ENCODE measurements at regions of chr6 and their contacts with region 1.

Region 1: GRCh38 chr6:28683944-28684538 is 158.4 kb downstream of the GPX5 start:
- DNase-seq: peak; percentile 55
- H3K4me3 ChIP-seq: no peak overlapping the region
- H3K27ac ChIP-seq: no peak overlapping the region
- H3K4me1 ChIP-seq: peaks cover 7% of the 10 kb centered on the region
- H3K27me3 ChIP-seq: peaks cover 20 to 25% of the 10 kb centered on the region in 2 experiments
- CTCF ChIP-seq: peak; percentile 43 to 48
- POLR2A ChIP-seq: no peak

Region 2: DNA sequence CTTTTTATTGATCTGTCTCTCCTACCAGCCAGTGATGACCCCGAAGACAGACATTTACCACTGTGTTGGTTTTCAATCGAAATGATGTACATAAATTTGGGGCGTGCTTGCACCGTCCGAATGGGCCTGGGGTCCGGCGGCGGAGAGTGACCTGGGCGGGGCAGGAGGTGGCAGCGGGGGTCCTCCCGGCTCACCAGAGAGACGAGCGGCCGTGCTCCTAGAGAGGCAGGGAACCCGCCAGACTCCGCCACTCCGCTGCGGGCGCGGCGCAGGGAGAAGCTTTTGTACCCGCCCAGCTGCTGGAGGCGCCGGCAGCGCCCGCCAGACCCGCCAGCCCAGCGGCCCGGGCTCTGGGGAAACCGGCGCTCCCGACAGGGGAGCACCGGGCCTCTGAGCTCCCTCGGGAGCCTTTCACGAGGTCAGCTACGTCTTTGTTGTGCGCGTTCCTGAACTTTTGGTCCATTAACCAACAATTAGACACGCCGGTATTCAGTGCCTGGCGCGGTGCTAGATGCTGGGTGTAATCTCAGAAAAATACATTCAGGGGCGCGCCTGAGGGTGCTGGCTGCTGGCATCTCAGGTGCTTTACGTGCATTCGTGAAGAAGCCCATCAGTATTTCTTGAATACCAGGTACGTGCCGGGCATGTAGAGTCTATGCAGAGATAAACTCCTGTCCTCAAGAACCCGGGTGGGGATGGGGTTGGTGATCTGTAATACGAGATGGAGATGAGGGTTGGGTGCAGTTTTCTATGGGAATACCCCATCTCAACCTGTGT is 402.6 kb before region 1 on chr6 and contains the start of gene PGBD1:
- CTCF ChIA-PET with region 1: no interaction called
- POLR2A ChIA-PET with region 1: no interaction called
- dilution Hi-C with region 1: no loop called
- intact Hi-C with region 1: loop called (anchors 10 kb)
- DNase-seq: peak; percentile 77
- H3K4me3 ChIP-seq: peak within 1 kb of the TSS; percentile 68 to 96 (median 93)
- H3K27ac ChIP-seq: peak within 1 kb of the TSS; percentile 46
- H3K4me1 ChIP-seq: peaks cover 7% of the 10 kb centered on the region
- H3K27me3 ChIP-seq: no peaks in the 10 kb centered on the region
- CTCF ChIP-seq: no peak
- POLR2A ChIP-seq: peak; percentile 81
- total RNA-seq, gene PGBD1: 9.6 and 10.1 TPM in 2 replicates

Region 3: DNA sequence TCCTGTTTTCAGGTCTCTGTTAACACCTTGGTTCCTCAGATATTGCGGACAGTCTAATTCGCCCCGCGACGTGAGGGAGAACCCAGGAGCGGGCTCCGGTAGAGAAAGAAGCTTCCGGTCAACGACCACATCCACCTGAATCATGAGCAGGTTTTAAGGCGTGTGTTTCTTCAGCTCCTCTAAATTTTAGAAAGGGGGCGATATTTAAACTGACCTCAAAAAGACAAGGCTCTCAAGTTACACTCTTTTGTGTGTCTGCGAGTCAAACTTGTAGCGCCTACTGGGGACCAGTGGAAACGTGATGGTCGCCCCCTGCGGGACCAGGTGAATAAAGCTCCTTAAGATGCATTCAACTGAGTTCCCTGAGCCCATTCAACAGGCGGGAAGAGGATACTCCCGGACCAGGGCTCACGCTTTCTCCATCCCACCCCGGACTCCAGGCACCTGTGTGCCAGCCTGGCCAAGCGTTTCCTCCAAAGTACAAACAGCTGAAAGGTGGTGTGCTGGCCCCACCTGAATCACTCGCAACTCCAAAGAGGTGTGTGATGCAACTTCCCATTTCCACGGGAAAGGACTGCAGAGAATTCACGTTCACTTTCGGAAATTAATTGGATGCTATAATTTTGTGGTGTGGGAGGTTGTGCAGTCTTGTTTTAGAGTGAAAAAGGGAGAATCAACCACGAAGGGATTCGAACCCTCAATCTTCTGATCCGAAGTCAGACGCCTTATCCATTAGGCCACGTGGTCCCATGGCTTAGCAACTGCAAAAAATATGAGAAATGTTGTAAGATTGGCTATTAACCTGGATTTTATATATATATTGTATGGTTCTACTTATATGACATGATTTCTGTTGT is 141.4 kb before region 1 on chr6:
- CTCF ChIA-PET with region 1: no interaction called
- POLR2A ChIA-PET with region 1: no interaction called
- dilution Hi-C with region 1: no loop called
- intact Hi-C with region 1: loop called (anchors 5 kb)
- DNase-seq: peak; percentile 70
- H3K4me3 ChIP-seq: no peak overlapping the region
- H3K27ac ChIP-seq: no peak overlapping the region
- H3K4me1 ChIP-seq: peaks cover 13% of the 10 kb centered on the region
- H3K27me3 ChIP-seq: peaks cover 0 to under 1% of the 10 kb centered on the region in 2 experiments
- CTCF ChIP-seq: peak in 1 of 2 donors; percentile 33
- POLR2A ChIP-seq: no peak

Region 4: GRCh38 chr6:28673800-28674671 is 10.0 kb before region 1 on chr6:
- CTCF ChIA-PET with region 1: interaction called, 13 read pairs
- POLR2A ChIA-PET with region 1: no interaction called
- dilution Hi-C with region 1: no loop called
- intact Hi-C with region 1: no loop called
- DNase-seq: peak; percentile 70
- H3K4me3 ChIP-seq: peak overlapping the region; percentile 1 to 74 (median 3)
- H3K27ac ChIP-seq: no peak overlapping the region
- H3K4me1 ChIP-seq: peaks cover 8% of the 10 kb centered on the region
- H3K27me3 ChIP-seq: peaks cover 5 to 6% of the 10 kb centered on the region in 2 experiments
- CTCF ChIP-seq: no peak
- POLR2A ChIP-seq: no peak

Region 5: DNA sequence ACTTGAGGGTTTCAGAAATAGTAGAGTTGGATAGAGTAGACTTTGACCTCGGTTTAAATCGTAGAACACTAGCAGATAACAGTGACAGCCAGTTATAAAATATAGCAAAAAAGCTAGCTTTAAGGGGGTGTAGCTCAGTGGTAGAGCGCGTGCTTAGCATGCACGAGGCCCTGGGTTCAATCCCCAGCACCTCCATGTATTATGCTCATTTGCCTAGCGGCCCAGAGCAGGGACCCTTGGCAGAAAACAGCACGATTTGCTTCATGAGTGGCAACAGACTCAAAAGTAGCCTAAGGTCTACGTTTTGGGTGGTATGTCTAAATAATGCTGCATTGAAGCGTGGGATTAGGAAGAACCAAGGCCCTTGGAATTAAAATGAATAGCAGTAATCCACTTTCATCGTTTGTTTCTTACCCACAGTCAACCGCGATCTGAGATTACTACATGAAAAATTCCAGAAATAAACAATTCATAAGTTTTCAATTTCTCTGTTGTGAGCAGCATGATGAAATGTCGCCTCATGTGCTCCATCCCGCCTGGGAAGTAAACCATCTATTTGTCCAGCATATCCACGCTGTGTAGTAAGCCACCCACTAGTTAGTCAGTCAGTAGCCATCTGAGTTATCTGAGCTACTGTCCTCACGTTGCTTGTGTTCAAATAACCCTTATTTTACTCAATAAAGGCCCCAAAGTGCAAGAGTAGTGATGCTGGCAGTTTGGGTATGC is 26.6 kb after region 1 on chr6:
- CTCF ChIA-PET with region 1: no interaction called
- POLR2A ChIA-PET with region 1: no interaction called
- dilution Hi-C with region 1: no loop called
- intact Hi-C with region 1: no loop called
- DNase-seq: no peak
- H3K4me3 ChIP-seq: no peak overlapping the region
- H3K27ac ChIP-seq: no peak overlapping the region
- H3K4me1 ChIP-seq: peaks cover 5% of the 10 kb centered on the region
- H3K27me3 ChIP-seq: peaks cover 0 to 2% of the 10 kb centered on the region in 2 experiments
- CTCF ChIP-seq: no peak
- POLR2A ChIP-seq: no peak

Region 6: GRCh38 chr6:28758046-28758817 is 74.2 kb after region 1 on chr6:
- CTCF ChIA-PET with region 1: no interaction called
- POLR2A ChIA-PET with region 1: no interaction called
- dilution Hi-C with region 1: no loop called
- intact Hi-C with region 1: no loop called
- DNase-seq: no peak
- H3K4me3 ChIP-seq: no peak overlapping the region
- H3K27ac ChIP-seq: no peak overlapping the region
- H3K4me1 ChIP-seq: no peaks in the 10 kb centered on the region
- H3K27me3 ChIP-seq: no peaks in the 10 kb centered on the region
- CTCF ChIP-seq: no peak
- POLR2A ChIP-seq: no peak

Region 7: GRCh38 chr6:28923318-28924102 is 239.5 kb after region 1 on chr6 and contains the start of gene TRIM27:
- CTCF ChIA-PET with region 1: interaction called, 3 read pairs
- POLR2A ChIA-PET with region 1: no interaction called
- dilution Hi-C with region 1: no loop called
- intact Hi-C with region 1: loop called (anchors 1 kb)
- DNase-seq: peak; percentile 85
- H3K4me3 ChIP-seq: peak within 1 kb of the TSS; percentile 55 to 90 (median 63)
- H3K27ac ChIP-seq: peak within 1 kb of the TSS; percentile 77
- H3K4me1 ChIP-seq: peaks cover 18% of the 10 kb centered on the region
- H3K27me3 ChIP-seq: no peaks in the 10 kb centered on the region
- CTCF ChIP-seq: no peak
- POLR2A ChIP-seq: peak; percentile 95
- total RNA-seq, gene TRIM27: 67.5 and 69.2 TPM in 2 replicates

Region 8: DNA sequence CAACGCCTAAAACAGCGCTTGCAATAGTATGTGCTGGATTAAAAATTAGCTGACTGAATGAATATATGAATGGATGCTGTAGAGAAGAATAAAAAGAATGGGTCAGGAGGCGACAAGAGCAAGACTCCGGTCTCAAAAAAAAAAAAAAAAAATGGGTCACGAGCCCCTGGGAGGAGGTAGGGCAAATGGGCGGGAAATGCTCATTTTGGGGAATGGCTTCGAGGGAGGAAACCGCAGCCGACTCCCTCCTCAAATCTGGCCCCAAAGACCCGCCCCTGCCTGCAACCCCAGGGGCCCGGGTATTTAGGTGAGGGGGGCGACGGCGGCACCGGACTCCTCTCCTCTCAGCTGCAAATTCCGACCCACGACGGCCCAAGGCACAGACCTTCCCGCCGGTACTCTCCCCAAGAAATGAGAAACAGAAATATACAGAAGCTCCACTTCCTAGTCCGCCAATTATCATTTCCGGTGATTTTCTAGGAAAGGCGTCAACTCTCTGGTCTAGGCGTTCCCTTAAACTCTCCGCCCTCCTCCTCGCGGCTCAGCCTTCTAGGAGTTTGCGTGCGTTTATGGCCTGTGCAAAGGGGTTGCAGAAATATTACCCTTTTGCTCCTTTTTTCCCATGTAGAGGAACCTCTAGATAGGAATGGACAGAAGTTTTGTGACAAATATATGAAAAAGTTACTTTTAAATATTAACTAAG is 321.3 kb after region 1 on chr6 and contains the start of gene ZNF311:
- CTCF ChIA-PET with region 1: no interaction called
- POLR2A ChIA-PET with region 1: no interaction called
- dilution Hi-C with region 1: no loop called
- intact Hi-C with region 1: no loop called
- DNase-seq: peak; percentile 57
- H3K4me3 ChIP-seq: peak within 1 kb of the TSS; percentile 52 to 75 (median 63)
- H3K27ac ChIP-seq: no peak within 1 kb of the TSS
- H3K4me1 ChIP-seq: peaks cover 5% of the 10 kb centered on the region
- H3K27me3 ChIP-seq: peaks cover 2 to 14% of the 10 kb centered on the region in 2 experiments
- CTCF ChIP-seq: no peak
- POLR2A ChIP-seq: peak; percentile 62
- total RNA-seq, gene ZNF311: 0.35 and 0.55 TPM in 2 replicates

Region 9: GRCh38 chr6:29016559-29017427 is 332.8 kb after region 1 on chr6:
- CTCF ChIA-PET with region 1: interaction called, 4 read pairs
- POLR2A ChIA-PET with region 1: no interaction called
- dilution Hi-C with region 1: no loop called
- intact Hi-C with region 1: loop called (anchors 1 kb)
- DNase-seq: peak; percentile 86
- H3K4me3 ChIP-seq: peak overlapping the region; percentile 44 to 90 (median 80)
- H3K27ac ChIP-seq: no peak overlapping the region
- H3K4me1 ChIP-seq: peaks cover 9% of the 10 kb centered on the region
- H3K27me3 ChIP-seq: peaks cover 2 to 3% of the 10 kb centered on the region in 2 experiments
- CTCF ChIP-seq: peak; percentile 72 to 78
- POLR2A ChIP-seq: no peak